ENCODE measurements at regions of chr6 and their contacts with region 1.

Region 1: DNA sequence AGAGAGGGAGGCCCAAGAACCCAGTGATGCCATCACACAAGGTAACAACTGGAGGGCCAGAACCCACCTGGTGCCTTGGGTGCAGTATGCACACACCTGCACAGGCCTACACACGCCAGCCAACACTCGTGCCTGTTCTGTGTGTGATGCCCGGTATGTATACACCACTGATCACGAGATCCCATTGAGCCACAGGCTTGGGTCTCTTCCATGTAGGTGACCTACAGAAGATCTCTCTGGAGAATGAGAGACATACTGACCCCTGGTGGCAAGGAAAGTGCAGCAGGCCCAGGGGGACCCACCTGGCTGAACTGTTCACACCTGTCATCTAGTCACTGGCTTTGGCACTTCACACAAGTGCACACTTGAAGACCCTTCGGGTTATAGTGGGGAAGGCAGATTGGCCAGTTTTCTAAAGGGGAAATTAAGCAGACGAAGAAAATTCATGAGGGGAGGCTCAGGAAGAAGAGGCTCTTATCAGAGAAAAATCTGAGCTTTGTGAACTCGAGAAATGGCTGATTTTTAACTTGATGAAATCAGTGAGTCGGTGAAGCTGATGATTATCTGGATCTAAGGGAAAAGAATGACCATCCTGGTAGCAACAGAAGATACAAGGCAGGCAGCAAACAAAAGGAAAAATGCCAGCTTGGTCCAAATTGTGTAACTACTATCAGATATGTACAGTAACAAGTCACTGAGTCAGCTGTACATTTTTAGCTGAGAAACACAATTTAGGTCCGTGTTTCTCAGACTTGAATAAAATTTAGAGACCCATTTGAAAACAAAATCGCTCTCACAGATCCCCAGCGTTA is 69.1 kb upstream of the PBOV1 start:
- DNase-seq: no peak

Region 2: GRCh38 chr6:138194287-138194686 is 93.1 kb before region 1 on chr6:
- intact Hi-C with region 1: no loop called
- DNase-seq: no peak

Region 3: GRCh38 chr6:138403801-138404661 is 116.7 kb after region 1 on chr6 and contains the start of gene HEBP2:
- intact Hi-C with region 1: loop called (anchors 5 kb)
- DNase-seq: peak; percentile 99
- total RNA-seq, gene HEBP2: 98.9 TPM

Region 4: GRCh38 chr6:138517635-138518034 is 230.3 kb after region 1 on chr6:
- intact Hi-C with region 1: loop called (anchors 10 kb)
- DNase-seq: peak; percentile 79

Region 5: GRCh38 chr6:138588805-138589434 is 301.6 kb after region 1 on chr6:
- intact Hi-C with region 1: loop called (anchors 10 kb)
- DNase-seq: no peak

Measured in cardiac septum (tissue), 1 donor.